ENCODE measurements at regions of chr3 and their contacts with region 1.

Region 1: GRCh38 chr3:131526801-131527347 is 24.1 kb upstream of the MRPL3 start:
- DNase-seq: no peak
- CTCF ChIP-seq: peak; percentile 18

Region 2: GRCh38 chr3:132029182-132029902 is 502.5 kb after region 1 on chr3:
- in situ Hi-C with region 1: loop called (anchors 25 kb)
- DNase-seq: peak; percentile 76
- CTCF ChIP-seq: peak; percentile 91

Region 3: DNA sequence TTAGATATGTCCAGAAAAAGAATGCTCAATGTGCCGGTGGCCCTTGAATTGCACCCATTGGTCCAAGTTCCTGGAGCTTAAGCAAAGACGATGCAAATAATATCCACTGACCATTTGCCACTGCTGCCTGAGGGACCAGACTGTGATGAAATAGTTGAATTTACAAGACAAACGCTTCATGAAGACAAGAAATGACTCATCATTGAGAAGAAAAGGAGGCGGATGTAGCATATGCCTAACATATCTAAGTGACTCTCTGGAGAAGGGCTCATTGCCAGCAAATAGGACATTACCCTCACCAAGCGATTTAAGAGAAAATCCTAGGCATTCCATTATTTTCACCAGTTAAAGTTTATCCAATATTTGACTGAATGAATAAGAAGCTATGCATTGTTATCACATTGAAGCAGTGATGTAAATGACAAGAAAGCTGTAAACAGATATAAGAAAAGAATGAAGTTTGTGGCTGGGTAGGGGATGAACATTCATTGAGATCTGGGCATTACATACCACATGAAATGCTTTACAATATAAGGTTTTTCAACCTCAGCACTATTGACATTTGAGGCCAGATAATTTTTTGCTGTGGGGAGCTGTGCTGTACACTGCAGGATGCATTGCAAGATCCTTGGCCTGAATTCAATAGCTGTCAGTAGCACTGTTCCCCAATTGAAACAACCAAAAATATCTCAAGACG is 556.9 kb after region 1 on chr3:
- in situ Hi-C with region 1: no loop called
- DNase-seq: no peak
- CTCF ChIP-seq: no peak

Measured in GM13977 (cell line).